CD4-positive, alpha-beta memory T cell (primary cell): ENCODE measurements at regions of chr5 and their contacts with region 1.

Region 1: DNA sequence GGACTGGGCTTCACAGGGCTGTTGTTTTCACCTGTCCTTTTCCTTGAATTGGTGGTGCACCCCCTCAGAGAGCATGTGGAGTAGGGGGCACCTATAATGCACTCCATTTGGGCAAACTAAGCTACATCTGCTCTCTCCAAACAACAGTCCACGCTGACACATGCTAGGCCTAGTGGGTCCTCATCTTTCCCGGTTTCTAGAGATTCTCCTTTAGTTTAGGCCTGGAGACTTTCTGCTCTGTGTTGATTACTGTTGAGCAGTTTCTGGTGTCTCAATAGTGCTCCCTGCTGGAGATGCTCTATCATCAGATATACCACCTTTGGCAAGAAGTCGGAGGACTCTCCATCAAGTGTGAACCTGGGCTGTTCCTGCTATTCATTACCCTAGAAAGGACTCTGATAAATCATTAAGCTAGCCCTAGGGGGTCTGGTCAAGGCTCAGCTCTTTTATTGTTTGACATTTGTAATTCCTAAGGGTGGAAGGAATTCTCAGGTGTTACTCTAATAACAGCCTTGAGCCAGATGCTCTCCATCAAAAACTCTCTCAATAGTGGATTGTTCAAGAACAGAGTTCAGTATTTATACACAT is 64.0 kb upstream of the FYB1 start:
- DNase-seq: peak; percentile 77 to 81 (median 79)
- H3K4me3 ChIP-seq: no peak overlapping the region
- H3K4me3 Mint-ChIP-seq: peak overlapping the region in 5 of 8 donors; percentile 7 to 70 (median 10)
- H3K27ac ChIP-seq: no peak overlapping the region
- H3K27ac Mint-ChIP-seq: peak overlapping the region; percentile 16 to 96 (median 58)
- H3K4me1 ChIP-seq: peaks cover 13% of the 10 kb centered on the region
- H3K4me1 Mint-ChIP-seq: peaks cover 11 to 43% (median 28%) of the 10 kb centered on the region in 4 donors
- H3K27me3 ChIP-seq: no peaks in the 10 kb centered on the region
- H3K27me3 Mint-ChIP-seq: peaks cover 5 to 7% of the 10 kb centered on the region in 2 donors

Region 2: GRCh38 chr5:38994324-38994927 is 288.9 kb before region 1 on chr5:
- CTCF ChIA-PET with region 1: no interaction called
- POLR2A ChIA-PET with region 1: no interaction called
- intact Hi-C with region 1: loop called (anchors 1 kb)
- DNase-seq: peak; percentile 27 to 45 (median 39)
- H3K4me3 ChIP-seq: no peak overlapping the region
- H3K4me3 Mint-ChIP-seq: no peak overlapping the region
- H3K27ac ChIP-seq: no peak overlapping the region
- H3K27ac Mint-ChIP-seq: peak overlapping the region in 1 of 7 donors; percentile 40
- H3K4me1 ChIP-seq: peaks cover 3% of the 10 kb centered on the region
- H3K4me1 Mint-ChIP-seq: peaks cover 5 to 33% (median 20%) of the 10 kb centered on the region in 4 donors
- H3K27me3 ChIP-seq: no peaks in the 10 kb centered on the region
- H3K27me3 Mint-ChIP-seq: no peaks in the 10 kb centered on the region

Region 3: DNA sequence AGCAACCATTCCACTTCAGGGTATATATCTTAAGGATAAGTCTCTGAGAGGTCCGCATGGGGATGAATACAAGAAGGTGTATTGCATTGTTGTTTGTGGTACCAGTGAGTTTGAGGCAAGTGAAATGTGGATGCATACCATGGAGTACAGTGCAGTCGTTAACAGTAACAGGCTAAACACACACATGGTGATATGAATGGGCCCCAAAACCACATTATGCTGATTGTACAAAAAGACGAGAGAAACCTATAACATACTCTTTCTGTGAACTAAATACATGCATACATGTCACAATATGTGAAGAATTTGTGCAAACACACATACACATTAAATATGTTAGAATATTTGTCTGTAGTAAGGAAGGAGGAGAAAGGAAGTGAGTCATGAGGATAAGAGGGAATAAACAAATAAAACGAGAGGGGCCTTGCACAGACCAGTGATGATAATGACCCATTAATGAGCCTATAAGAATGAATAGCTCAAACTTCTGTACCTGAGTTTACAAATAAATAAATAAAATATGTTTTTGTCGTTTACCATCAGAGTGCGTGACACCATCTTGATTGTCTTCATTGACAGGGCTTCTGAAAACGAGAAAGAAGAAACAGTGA is 142.7 kb before region 1 on chr5:
- CTCF ChIA-PET with region 1: interaction called, 20 read pairs
- POLR2A ChIA-PET with region 1: no interaction called
- intact Hi-C with region 1: no loop called
- DNase-seq: no peak
- H3K4me3 ChIP-seq: no peak overlapping the region
- H3K4me3 Mint-ChIP-seq: peak overlapping the region in 2 of 8 donors; percentile 1 to 45
- H3K27ac ChIP-seq: peak overlapping the region; percentile 11
- H3K27ac Mint-ChIP-seq: peak overlapping the region in 6 of 7 donors; percentile 19 to 75 (median 42)
- H3K4me1 ChIP-seq: peaks cover 69% of the 10 kb centered on the region
- H3K4me1 Mint-ChIP-seq: peaks cover 24 to 31% (median 26%) of the 10 kb centered on the region in 4 donors
- H3K27me3 ChIP-seq: no peaks in the 10 kb centered on the region
- H3K27me3 Mint-ChIP-seq: no peaks in the 10 kb centered on the region

Region 4: GRCh38 chr5:39164529-39165402 is 118.6 kb before region 1 on chr5:
- CTCF ChIA-PET with region 1: interaction called, 15 read pairs
- POLR2A ChIA-PET with region 1: no interaction called
- intact Hi-C with region 1: no loop called
- DNase-seq: peak in 2 of 5 donors; percentile 37 to 62
- H3K4me3 ChIP-seq: peak overlapping the region in 1 of 2 donors; percentile 34
- H3K4me3 Mint-ChIP-seq: peak overlapping the region; percentile 42 to 83 (median 78)
- H3K27ac ChIP-seq: peak overlapping the region; percentile 54
- H3K27ac Mint-ChIP-seq: peak overlapping the region; percentile 87 to 94 (median 94)
- H3K4me1 ChIP-seq: peaks cover 100% of the 10 kb centered on the region
- H3K4me1 Mint-ChIP-seq: peaks cover 68 to 96% (median 80%) of the 10 kb centered on the region in 4 donors
- H3K27me3 ChIP-seq: no peaks in the 10 kb centered on the region
- H3K27me3 Mint-ChIP-seq: no peaks in the 10 kb centered on the region

Region 5: DNA sequence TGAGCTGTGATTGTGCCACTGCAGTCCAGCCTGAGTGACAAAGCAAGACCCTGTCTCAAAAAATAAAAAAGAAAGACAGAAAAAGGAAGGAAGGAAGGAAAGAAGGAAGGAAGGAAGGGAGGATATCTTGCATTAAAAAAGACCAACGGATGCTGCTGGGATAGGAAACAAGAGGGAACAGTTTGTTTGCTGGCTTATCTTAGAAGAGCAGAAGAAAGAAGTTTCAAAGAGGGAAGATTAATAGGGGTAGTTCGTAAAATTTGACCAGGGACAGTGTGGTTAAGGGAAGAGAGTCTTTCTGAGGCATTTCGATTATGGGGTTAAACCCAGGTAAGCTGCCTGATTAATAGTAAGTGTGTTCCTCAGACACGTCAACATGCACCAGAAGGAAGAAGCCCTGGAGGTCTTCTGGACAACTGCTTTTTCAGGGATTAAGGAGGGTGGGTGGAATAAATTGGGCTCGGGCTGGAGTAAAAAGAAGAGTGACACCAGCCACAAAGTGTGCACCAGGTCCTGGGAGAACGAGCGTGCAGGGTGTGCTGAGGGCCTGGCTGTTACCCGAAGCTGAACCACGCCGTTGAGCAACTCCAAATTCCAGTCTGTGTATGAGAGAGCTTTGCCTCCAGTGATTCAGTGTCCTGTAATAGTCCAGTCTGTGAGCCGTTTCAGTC is 88.7 kb before region 1 on chr5:
- CTCF ChIA-PET with region 1: interaction called, 32 read pairs
- POLR2A ChIA-PET with region 1: interaction called, 22 read pairs
- intact Hi-C with region 1: loop called (anchors 1 kb)
- DNase-seq: no peak
- H3K4me3 ChIP-seq: peak overlapping the region; percentile 13 to 49
- H3K4me3 Mint-ChIP-seq: peak overlapping the region; percentile 84 to 92 (median 88)
- H3K27ac ChIP-seq: peak overlapping the region; percentile 59
- H3K27ac Mint-ChIP-seq: peak overlapping the region; percentile 90 to 98 (median 95)
- H3K4me1 ChIP-seq: peaks cover 77% of the 10 kb centered on the region
- H3K4me1 Mint-ChIP-seq: peaks cover 53 to 79% (median 66%) of the 10 kb centered on the region in 4 donors
- H3K27me3 ChIP-seq: no peaks in the 10 kb centered on the region
- H3K27me3 Mint-ChIP-seq: no peaks in the 10 kb centered on the region

Region 6: GRCh38 chr5:39224196-39224761 is 59.0 kb before region 1 on chr5:
- CTCF ChIA-PET with region 1: interaction called, 221 read pairs
- POLR2A ChIA-PET with region 1: interaction called, 60 read pairs
- intact Hi-C with region 1: no loop called
- DNase-seq: no peak
- H3K4me3 ChIP-seq: no peak overlapping the region
- H3K4me3 Mint-ChIP-seq: no peak overlapping the region
- H3K27ac ChIP-seq: no peak overlapping the region
- H3K27ac Mint-ChIP-seq: no peak overlapping the region
- H3K4me1 ChIP-seq: peaks cover 8% of the 10 kb centered on the region
- H3K4me1 Mint-ChIP-seq: peaks cover 13 to 20% (median 14%) of the 10 kb centered on the region in 4 donors
- H3K27me3 ChIP-seq: no peaks in the 10 kb centered on the region
- H3K27me3 Mint-ChIP-seq: no peaks in the 10 kb centered on the region